GM12878 (cell line): ENCODE measurements at regions of chr4 and their contacts with region 1.

Region 1: DNA sequence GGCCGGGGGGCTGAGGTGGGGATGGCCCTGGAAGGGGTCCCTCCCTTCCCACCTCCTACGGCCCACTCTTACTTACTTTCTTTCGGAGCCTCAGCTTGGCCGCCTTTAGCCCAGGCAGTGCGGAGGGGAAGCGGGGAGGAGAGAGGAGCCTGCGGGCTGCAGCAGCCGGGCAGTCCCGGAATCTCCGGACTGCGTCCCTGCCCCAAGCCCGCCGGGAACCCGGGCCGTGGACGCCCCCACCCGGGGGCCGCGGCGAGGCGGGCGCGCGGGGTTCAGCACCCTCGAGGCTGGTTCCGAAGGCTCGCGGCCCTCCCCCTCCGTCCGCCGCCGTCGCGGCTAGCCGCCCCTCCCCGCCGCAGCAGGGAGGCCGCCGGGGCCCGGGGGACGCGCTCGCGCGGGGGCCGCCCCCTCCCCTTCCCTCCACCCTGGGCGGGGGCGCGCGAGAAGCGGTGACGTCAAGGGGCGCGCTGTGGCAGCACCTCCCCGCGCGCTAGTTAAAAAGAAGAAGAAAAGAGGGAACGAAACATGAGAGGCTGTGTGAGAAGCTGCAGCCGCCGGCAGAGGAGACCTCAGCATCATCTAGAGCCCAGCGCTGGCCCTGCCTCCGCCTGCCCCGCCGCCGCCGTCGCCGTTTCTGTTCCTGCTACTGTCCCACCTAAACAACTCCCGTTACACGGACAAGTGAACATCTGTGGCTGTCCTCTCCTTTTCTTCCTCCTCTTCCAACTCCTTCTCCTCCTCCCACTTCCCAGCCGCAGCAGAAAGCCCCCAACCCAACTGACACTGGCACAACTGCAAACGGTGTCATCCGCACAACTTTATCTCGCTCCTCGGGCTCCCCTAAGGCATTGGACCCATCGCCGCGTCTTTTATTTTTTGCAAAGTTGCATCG is at the start of gene HHIP:
- DNase-seq: no peak
- ATAC-seq: peak; percentile 55
- H3K4me3 ChIP-seq: peak within 1 kb of the TSS; percentile 8; the same call in 1 of the 2 replicates
- H3K27ac ChIP-seq: no peak within 1 kb of the TSS
- H3K4me1 ChIP-seq: no peaks in the 10 kb centered on the region
- H3K27me3 ChIP-seq: peaks cover 3 to 17% of the 10 kb centered on the region in 2 experiments; a peak in 3 of 4 replicates
- CTCF ChIP-seq: no peak
- EP300 ChIP-seq: no peak
- POLR2A ChIP-seq: peak; percentile 31; the same call in 1 of the 2 replicates
- RAD21 ChIP-seq: no peak
- polyA plus RNA-seq, gene HHIP: 0.13 to 0.16 TPM

Region 2: DNA sequence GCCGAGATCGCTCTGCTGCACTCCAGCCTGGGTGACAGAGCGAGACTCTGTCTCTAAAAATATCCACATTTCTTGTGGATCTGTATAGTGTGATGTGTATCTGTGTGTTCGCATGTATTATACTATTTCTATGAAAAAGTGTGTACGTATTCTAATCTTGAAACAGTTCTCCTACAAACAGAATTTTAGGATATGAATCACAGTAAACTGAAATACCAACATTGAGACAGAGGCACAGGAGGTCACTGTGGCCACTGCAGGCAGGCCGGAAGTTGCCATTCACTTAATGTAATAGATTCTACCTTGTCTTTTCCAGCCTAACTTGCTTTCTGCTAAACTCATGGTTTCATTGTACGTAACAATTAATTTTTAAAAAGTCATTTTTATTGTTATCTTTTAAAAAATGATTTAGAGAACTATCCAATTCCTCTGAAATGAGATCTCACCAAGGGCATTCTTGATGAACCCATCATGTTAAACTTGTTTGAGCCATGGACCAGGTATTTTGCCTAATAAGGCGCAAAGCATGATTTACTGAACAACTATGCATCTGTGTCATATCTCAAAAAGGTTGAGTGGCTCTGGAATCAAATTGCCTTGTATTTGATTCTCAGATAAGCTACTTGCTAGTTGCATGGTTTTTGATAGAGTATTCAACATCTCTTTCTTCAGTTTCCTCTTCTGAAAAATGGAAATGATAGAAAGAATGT is 350.4 kb before region 1 on chr4:
- CTCF ChIA-PET with region 1: no interaction called
- POLR2A ChIA-PET with region 1: no interaction called
- RAD21 ChIA-PET with region 1: no interaction called
- SMC1A ChIA-PET with region 1: no interaction called
- in situ Hi-C with region 1: no loop called
- intact Hi-C with region 1: no loop called
- DNase-seq: no peak
- ATAC-seq: no peak
- H3K4me3 ChIP-seq: no peak overlapping the region
- H3K27ac ChIP-seq: no peak overlapping the region
- H3K4me1 ChIP-seq: no peaks in the 10 kb centered on the region
- H3K27me3 ChIP-seq: no peaks in the 10 kb centered on the region
- CTCF ChIP-seq: no peak
- EP300 ChIP-seq: no peak
- POLR2A ChIP-seq: no peak
- RAD21 ChIP-seq: no peak

Region 3: DNA sequence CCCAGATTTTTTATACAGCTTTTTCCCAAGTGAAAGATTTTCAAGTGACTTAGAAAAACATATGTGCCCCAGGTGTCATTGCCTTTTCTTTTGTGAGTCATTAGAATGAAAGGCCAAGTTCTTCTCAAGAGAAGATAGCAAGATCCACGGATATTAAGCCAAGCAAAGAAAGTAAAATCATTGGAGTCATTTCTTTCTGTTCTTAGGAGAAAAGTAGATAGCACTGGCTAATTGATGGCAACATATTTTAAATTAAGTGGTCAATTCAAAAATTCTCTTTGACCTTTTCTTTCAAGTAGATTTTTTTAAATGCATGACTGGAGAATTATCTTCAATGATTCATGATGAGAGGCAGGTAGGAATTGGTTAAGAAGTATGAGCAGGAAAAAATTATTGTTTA is 94.4 kb after region 1 on chr4:
- CTCF ChIA-PET with region 1: no interaction called
- POLR2A ChIA-PET with region 1: no interaction called
- RAD21 ChIA-PET with region 1: no interaction called
- SMC1A ChIA-PET with region 1: no interaction called
- in situ Hi-C with region 1: no loop called
- intact Hi-C with region 1: no loop called
- DNase-seq: no peak
- ATAC-seq: no peak
- H3K4me3 ChIP-seq: no peak overlapping the region
- H3K27ac ChIP-seq: no peak overlapping the region
- H3K4me1 ChIP-seq: no peaks in the 10 kb centered on the region
- H3K27me3 ChIP-seq: no peaks in the 10 kb centered on the region
- CTCF ChIP-seq: no peak
- EP300 ChIP-seq: no peak
- POLR2A ChIP-seq: no peak
- RAD21 ChIP-seq: no peak

Region 4: DNA sequence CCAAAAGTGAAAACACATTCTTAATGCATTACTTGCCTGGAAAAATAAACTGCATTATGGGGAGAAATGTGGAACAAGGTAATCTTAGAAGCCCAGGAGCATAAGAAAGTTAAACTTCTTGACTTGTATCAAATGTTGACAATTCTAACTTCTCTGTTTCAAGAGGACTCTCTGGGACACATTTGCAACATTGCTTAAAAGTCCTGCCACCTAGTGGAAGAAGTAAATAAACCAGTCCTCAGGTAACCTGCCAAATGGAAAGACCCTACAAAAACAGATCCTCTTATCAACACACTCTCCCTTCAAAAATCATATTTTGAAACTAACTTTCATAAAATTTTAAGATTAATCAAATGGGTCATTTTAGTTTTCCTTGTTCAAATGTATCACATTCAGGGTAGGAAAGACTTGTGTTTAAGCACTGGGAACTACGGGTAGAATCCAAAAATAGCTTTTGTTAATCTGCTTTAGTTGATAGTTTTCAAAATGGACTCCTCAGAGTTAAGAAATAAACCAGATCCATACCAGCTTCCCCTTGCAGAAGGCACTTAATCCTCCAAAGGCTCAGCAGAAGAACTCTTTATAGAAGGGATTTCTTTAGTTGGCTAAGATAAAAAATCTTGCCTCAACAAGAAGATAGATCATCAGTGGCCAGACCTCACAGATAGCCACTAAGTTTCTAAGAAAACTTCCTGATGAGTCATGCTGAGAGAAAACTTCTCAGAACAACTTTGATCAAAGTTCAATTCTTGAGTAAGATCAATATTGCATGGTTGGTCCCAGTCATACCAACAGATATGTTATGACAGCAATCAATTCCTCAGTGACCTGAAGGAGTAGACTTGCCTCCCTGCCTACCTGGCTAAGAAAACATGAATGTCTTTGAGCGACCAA is 141.7 kb after region 1 on chr4:
- CTCF ChIA-PET with region 1: no interaction called
- POLR2A ChIA-PET with region 1: no interaction called
- RAD21 ChIA-PET with region 1: no interaction called
- SMC1A ChIA-PET with region 1: interaction called, 3 read pairs
- in situ Hi-C with region 1: no loop called
- intact Hi-C with region 1: loop called (anchors 5 kb)
- DNase-seq: no peak
- ATAC-seq: peak; percentile 89
- H3K4me3 ChIP-seq: no peak overlapping the region
- H3K27ac ChIP-seq: no peak overlapping the region
- H3K4me1 ChIP-seq: no peaks in the 10 kb centered on the region
- H3K27me3 ChIP-seq: no peaks in the 10 kb centered on the region
- CTCF ChIP-seq: peak; percentile 42 to 57 (median 49); a peak in 5 of 6 replicates
- EP300 ChIP-seq: 0 out of 4 replicates have a peak, but pooled peaks of 1 of the 2 experiments have one; percentile 40
- POLR2A ChIP-seq: no peak
- RAD21 ChIP-seq: peak; percentile 66